ENCODE measurements at regions of chr14 and their contacts with region 1.

Region 1: DNA sequence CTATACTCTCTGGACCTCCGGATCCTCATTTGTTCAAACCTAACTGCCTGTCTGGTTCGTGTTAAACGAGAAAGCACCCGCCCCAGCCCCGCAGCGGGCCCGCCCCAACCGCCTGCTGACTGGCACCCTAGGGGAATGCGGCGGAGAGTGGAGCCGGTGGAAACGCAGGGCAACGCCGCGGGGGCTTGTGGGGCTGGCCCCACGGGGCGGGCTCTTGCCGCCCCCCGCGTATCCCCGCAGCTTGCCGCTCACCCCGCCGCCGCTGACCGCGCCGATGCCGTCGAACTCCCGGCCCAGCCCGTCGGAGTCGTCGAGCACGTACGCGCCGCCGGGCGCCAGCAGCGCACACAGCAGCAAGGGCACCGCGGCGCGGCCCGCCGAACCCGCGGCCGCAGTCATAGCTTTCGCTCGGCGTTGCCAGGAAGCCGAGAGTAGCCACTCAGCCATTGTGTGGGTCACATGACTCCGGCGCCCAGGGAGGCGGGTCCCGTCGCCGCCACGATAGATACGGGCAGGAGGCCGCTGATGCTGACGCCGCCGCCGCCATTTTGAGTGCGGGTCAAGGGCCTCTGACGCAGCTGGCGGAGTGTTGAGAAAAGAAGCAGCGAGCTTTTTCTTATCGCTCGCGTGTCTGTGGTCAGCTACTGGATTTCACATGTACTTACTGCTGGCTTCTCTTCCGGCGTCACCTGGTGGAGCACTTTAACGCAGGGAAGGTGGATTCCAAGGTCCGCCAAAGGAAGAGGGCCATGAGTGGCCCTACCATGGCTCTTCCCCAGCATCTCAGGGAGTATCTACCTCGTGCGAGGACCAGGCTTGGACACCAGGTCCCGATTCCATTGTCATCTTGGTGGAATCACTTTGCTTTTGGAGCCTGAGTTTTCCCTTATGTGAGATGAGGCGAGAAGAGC is at the start of gene GALC:
- DNase-seq: peak; percentile 90 to 93 (median 92)
- ATAC-seq: peak; percentile 88
- H3K4me3 ChIP-seq: peak within 1 kb of the TSS; percentile 62
- H3K4me3 Mint-ChIP-seq: peak within 1 kb of the TSS; percentile 88 to 98 (median 94)
- H3K27ac ChIP-seq: peak within 1 kb of the TSS; percentile 94
- H3K27ac Mint-ChIP-seq: peak within 1 kb of the TSS; percentile 89 to 100 (median 99)
- H3K4me1 ChIP-seq: peaks cover 16 to 39% of the 10 kb centered on the region in 2 donors
- H3K4me1 Mint-ChIP-seq: peaks cover 40 to 74% (median 70%) of the 10 kb centered on the region in 7 donors
- H3K27me3 ChIP-seq: no peaks in the 10 kb centered on the region
- H3K27me3 Mint-ChIP-seq: no peaks in the 10 kb centered on the region
- total RNA-seq, gene GALC: 17.8 to 26.1 (median 22.3) TPM

Region 2: DNA sequence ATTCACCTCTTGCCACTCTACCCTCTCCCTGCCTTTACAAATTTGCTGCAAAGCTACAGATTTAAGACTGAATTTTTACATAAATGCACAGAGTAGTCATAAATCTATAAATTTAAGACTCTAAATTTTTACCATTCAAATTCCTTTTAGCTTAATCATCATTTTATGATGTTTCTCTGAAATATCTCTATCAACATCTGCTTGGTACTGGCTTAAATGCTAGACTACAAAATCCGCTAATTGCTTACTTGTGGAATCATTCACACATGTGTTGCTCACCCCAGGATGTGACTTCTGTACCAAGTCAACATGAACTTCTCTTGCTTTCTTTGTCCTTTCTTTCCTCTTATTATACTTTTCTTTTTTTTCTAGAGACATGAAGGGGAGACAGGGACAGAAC is 109.2 kb before region 1 on chr14:
- CTCF ChIA-PET with region 1: no interaction called
- POLR2A ChIA-PET with region 1: no interaction called
- intact Hi-C with region 1: no loop called
- DNase-seq: no peak
- ATAC-seq: no peak
- H3K4me3 ChIP-seq: no peak overlapping the region
- H3K4me3 Mint-ChIP-seq: no peak overlapping the region
- H3K27ac ChIP-seq: no peak overlapping the region
- H3K27ac Mint-ChIP-seq: no peak overlapping the region
- H3K4me1 ChIP-seq: no peaks in the 10 kb centered on the region
- H3K4me1 Mint-ChIP-seq: no peaks in the 10 kb centered on the region
- H3K27me3 ChIP-seq: peaks cover 0 to 4% of the 10 kb centered on the region in 2 donors
- H3K27me3 Mint-ChIP-seq: peaks cover 10 to 57% (median 40%) of the 10 kb centered on the region in 5 donors

Region 3: DNA sequence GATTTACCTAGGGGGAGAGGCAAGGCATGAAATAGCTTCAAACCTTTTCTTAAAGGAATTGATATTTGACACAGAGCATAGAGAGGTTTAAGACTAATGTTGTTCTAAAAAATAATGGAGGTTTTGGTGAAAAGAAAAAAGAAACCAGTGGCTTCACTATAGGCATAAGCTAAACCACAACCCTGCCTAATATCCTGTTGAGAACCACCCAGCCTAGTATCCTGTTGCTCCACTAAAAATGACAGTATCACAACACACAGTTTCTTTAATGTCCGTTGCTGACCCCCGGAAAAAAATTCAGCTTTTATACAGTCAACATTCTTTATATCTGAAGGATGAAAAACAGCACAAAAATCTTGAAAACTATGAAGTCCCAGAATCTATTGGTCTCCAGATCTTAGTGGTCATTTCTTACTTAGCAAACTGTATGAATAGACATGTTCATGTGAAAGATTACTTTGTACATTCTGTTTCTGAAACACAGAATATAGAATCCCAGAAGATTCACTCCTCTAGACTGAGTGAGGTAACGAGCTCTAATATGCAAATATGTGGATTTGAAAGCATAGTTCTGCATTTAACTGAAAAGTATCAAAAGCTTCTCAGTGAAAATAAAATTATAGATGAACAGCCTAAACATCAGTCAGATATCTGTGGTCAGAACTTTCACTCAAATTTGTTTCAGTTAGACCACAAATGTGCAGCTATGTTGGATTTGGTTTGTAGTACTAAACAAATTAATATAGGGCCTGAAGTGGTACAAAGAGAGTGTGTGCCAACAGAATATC is 40.5 kb before region 1 on chr14:
- CTCF ChIA-PET with region 1: no interaction called
- POLR2A ChIA-PET with region 1: interaction called, 5 read pairs
- intact Hi-C with region 1: loop called (anchors 1 to 5 kb)
- DNase-seq: peak in 5 of 9 donors; percentile 12 to 20 (median 14)
- ATAC-seq: peak; percentile 71
- H3K4me3 ChIP-seq: no peak overlapping the region
- H3K4me3 Mint-ChIP-seq: peak overlapping the region; percentile 3 to 85 (median 70)
- H3K27ac ChIP-seq: peak overlapping the region; percentile 56
- H3K27ac Mint-ChIP-seq: peak overlapping the region; percentile 78 to 94 (median 91)
- H3K4me1 ChIP-seq: peaks cover 20 to 21% of the 10 kb centered on the region in 2 donors
- H3K4me1 Mint-ChIP-seq: peaks cover 27 to 62% (median 40%) of the 10 kb centered on the region in 7 donors
- H3K27me3 ChIP-seq: no peaks in the 10 kb centered on the region
- H3K27me3 Mint-ChIP-seq: no peaks in the 10 kb centered on the region

Region 4: GRCh38 chr14:88023658-88024187 is 30.8 kb after region 1 on chr14:
- CTCF ChIA-PET with region 1: no interaction called
- POLR2A ChIA-PET with region 1: interaction called, 11 read pairs
- intact Hi-C with region 1: loop called (anchors 1 to 2 kb)
- DNase-seq: peak in 4 of 9 donors; percentile 2 to 25 (median 17)
- ATAC-seq: peak; percentile 69
- H3K4me3 ChIP-seq: no peak overlapping the region
- H3K4me3 Mint-ChIP-seq: peak overlapping the region in 6 of 10 donors; percentile 6 to 41 (median 18)
- H3K27ac ChIP-seq: no peak overlapping the region
- H3K27ac Mint-ChIP-seq: peak overlapping the region; percentile 24 to 89 (median 69)
- H3K4me1 ChIP-seq: peaks cover 38 to 43% of the 10 kb centered on the region in 2 donors
- H3K4me1 Mint-ChIP-seq: peaks cover 49 to 84% (median 73%) of the 10 kb centered on the region in 7 donors
- H3K27me3 ChIP-seq: no peaks in the 10 kb centered on the region
- H3K27me3 Mint-ChIP-seq: no peaks in the 10 kb centered on the region

Region 5: GRCh38 chr14:88029500-88029899 is 36.5 kb after region 1 on chr14:
- CTCF ChIA-PET with region 1: no interaction called
- POLR2A ChIA-PET with region 1: interaction called, 11 read pairs
- intact Hi-C with region 1: loop called in 1 of 2 experiments (anchors 2 kb)
- DNase-seq: no peak
- ATAC-seq: peak; percentile 60
- H3K4me3 ChIP-seq: no peak overlapping the region
- H3K4me3 Mint-ChIP-seq: no peak overlapping the region
- H3K27ac ChIP-seq: no peak overlapping the region
- H3K27ac Mint-ChIP-seq: peak overlapping the region in 3 of 9 donors; percentile 6 to 27 (median 11)
- H3K4me1 ChIP-seq: peaks cover 29 to 35% of the 10 kb centered on the region in 2 donors
- H3K4me1 Mint-ChIP-seq: peaks cover 44 to 76% (median 65%) of the 10 kb centered on the region in 7 donors
- H3K27me3 ChIP-seq: no peaks in the 10 kb centered on the region
- H3K27me3 Mint-ChIP-seq: no peaks in the 10 kb centered on the region

Region 6: GRCh38 chr14:88043529-88044443 is 50.8 kb after region 1 on chr14:
- CTCF ChIA-PET with region 1: no interaction called
- POLR2A ChIA-PET with region 1: no interaction called
- intact Hi-C with region 1: no loop called
- DNase-seq: no peak
- ATAC-seq: no peak
- H3K4me3 ChIP-seq: no peak overlapping the region
- H3K4me3 Mint-ChIP-seq: no peak overlapping the region
- H3K27ac ChIP-seq: no peak overlapping the region
- H3K27ac Mint-ChIP-seq: no peak overlapping the region
- H3K4me1 ChIP-seq: peaks cover 0 to 4% of the 10 kb centered on the region in 2 donors
- H3K4me1 Mint-ChIP-seq: peaks cover 0 to 9% (median 2%) of the 10 kb centered on the region in 7 donors
- H3K27me3 ChIP-seq: no peaks in the 10 kb centered on the region
- H3K27me3 Mint-ChIP-seq: peaks cover 0 to 5% (median 0%) of the 10 kb centered on the region in 5 donors

Region 7: DNA sequence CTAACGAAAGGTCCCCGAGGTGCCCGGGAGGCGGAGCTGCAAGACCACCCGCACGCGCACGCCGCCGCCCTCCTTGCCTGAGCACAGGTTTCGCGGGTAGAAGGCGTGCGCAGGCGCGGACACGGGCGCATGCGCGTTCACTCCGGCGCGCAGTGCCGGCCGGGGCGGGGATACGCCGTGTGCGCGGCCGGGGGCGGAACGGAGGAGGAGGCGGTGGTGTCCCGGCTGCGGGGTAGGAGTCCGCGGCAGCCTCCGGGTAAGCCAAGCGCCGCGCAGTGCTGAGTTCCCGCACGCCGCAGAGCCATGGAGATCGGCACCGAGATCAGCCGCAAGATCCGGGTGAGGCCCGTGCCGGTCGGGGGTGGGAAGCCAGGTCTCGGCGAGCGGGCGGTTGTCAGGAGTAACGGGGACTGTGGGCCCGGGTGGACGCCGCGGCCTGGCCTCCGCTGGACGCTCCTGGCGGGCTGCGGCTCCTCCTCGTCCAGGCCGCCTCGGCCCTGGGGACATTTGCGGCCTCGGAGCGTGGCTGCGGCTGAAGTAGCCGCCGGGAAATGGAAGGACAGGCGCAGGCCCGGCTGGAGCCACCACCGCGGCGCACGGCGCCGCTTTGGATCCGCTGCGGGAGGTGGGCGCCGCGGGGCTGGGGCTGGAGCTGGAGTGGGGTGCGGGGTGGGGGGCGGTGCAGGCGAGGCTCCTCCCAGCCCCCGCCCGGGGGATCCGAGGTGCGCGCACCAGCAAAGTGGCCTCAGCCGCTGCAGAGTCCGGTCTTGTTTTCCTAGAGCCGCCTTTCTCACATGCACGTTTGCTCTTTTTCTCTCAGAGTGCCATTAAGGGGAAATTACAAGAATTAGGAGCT is 570.1 kb after region 1 on chr14 and contains the start of gene ZC3H14:
- CTCF ChIA-PET with region 1: no interaction called
- POLR2A ChIA-PET with region 1: no interaction called
- intact Hi-C with region 1: loop called in 1 of 2 experiments (anchors 5 kb)
- DNase-seq: peak; percentile 80 to 91 (median 88)
- ATAC-seq: peak; percentile 98
- H3K4me3 ChIP-seq: peak within 1 kb of the TSS; percentile 84
- H3K4me3 Mint-ChIP-seq: peak within 1 kb of the TSS; percentile 89 to 96 (median 92)
- H3K27ac ChIP-seq: peak within 1 kb of the TSS; percentile 72
- H3K27ac Mint-ChIP-seq: peak within 1 kb of the TSS; percentile 49 to 94 (median 84)
- H3K4me1 ChIP-seq: peaks cover 12 to 13% of the 10 kb centered on the region in 2 donors
- H3K4me1 Mint-ChIP-seq: peaks cover 19 to 44% (median 38%) of the 10 kb centered on the region in 7 donors
- H3K27me3 ChIP-seq: no peaks in the 10 kb centered on the region
- H3K27me3 Mint-ChIP-seq: peaks cover 0 to 27% (median 0%) of the 10 kb centered on the region in 5 donors
- total RNA-seq, gene ZC3H14: 40.1 to 66.2 (median 45.6) TPM

Region 8: DNA sequence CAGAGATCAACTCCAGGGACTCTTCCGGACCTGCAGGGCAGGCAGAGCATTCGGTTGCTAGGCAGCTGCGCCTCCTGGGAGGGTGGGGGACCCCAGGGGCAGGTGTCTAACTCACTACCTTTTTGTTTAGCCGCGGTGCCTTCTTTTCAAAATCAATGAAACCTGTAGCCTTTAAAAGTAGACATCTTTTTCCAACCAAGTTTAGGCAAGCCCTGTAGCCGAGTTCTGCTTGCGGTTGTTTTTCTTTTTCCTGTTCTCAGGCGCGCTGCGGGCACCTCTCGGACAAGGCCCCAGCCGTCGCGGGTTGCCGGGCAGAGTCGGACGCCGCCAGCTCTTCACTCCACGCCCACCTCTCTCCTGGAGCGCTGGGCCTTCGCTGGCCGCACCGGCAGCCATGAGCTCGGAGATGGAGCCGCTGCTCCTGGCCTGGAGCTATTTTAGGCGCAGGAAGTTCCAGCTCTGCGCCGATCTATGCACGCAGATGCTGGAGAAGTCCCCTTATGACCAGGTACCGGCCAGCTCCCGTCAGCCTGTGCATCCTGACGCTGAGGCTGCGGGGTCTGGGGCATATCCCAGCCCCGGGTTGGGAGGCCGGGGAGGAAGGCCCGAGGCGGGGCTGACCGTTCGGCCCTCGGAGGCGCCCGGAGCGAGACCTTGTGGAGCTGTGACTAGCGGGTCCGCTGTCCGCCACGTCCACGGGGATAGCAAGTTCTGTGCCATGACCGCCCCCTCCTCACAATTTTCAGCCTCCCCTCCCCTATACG is 831.5 kb after region 1 on chr14 and contains the start of gene TTC8:
- CTCF ChIA-PET with region 1: no interaction called
- POLR2A ChIA-PET with region 1: no interaction called
- intact Hi-C with region 1: loop called in 1 of 2 experiments (anchors 10 kb)
- DNase-seq: peak; percentile 75 to 92 (median 88)
- ATAC-seq: peak; percentile 98
- H3K4me3 ChIP-seq: peak within 1 kb of the TSS; percentile 74
- H3K4me3 Mint-ChIP-seq: peak within 1 kb of the TSS; percentile 72 to 98 (median 90)
- H3K27ac ChIP-seq: peak within 1 kb of the TSS; percentile 85
- H3K27ac Mint-ChIP-seq: peak within 1 kb of the TSS; percentile 97 to 99 (median 99)
- H3K4me1 ChIP-seq: peaks cover 5 to 6% of the 10 kb centered on the region in 2 donors
- H3K4me1 Mint-ChIP-seq: peaks cover 0 to 13% (median 11%) of the 10 kb centered on the region in 7 donors
- H3K27me3 ChIP-seq: no peaks in the 10 kb centered on the region
- H3K27me3 Mint-ChIP-seq: peaks cover 0 to 30% (median 8%) of the 10 kb centered on the region in 5 donors
- total RNA-seq, gene TTC8: 1.8 to 3.4 (median 2.1) TPM